GM12878 (cell line): ENCODE measurements at regions of chr5 and their contacts with region 1.

Region 1: DNA sequence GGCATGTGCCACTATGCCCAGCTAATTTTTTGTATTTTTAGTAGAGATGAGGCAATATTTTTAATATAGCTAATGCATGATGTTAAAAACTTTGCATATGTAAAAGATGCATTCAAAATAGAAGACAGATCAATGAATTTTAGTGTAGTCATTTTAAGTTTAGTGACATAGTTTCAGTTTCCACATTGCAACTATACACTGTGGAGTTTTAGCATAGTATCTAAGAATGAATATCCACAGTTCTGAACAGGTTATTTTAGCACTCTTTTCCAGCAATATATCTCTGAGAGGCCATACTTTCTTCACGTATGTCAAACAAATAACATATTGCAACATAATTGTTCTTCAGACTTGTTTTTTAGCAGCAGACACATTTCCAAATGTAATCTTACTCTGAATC is 39.3 kb downstream of the RAB24 start:
- DNase-seq: no peak
- ATAC-seq: no peak
- H3K4me3 ChIP-seq: no peak overlapping the region
- H3K27ac ChIP-seq: no peak overlapping the region
- H3K4me1 ChIP-seq: no peaks in the 10 kb centered on the region
- H3K27me3 ChIP-seq: no peaks in the 10 kb centered on the region
- CTCF ChIP-seq: no peak
- EP300 ChIP-seq: no peak
- POLR2A ChIP-seq: no peak
- RAD21 ChIP-seq: no peak

Region 2: DNA sequence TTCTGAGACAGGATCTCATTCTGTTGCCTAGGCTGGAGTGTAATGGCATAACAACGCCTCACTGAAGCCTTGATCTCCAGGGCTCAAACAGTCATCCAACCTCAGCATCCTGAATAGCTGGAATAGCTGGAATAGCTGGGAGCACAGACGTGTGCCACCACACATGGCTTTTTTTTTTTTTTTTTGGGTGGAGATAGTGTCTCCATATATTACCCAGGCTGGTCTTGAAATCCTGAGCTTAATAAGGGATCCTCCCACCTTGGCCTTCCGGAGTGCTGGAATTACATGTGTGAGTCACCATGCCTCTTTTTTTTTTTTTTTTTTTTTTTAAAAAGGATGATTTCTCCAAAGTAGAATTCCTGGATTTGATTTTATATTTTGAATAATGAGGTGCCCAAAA is 69.9 kb before region 1 on chr5:
- CTCF ChIA-PET with region 1: no interaction called
- POLR2A ChIA-PET with region 1: no interaction called
- RAD21 ChIA-PET with region 1: no interaction called
- SMC1A ChIA-PET with region 1: no interaction called
- in situ Hi-C with region 1: no loop called
- intact Hi-C with region 1: no loop called
- DNase-seq: no peak
- ATAC-seq: no peak
- H3K4me3 ChIP-seq: no peak overlapping the region
- H3K27ac ChIP-seq: no peak overlapping the region
- H3K4me1 ChIP-seq: peaks cover 8% of the 10 kb centered on the region; the same call in 1 of the 2 replicates
- H3K27me3 ChIP-seq: no peaks in the 10 kb centered on the region
- CTCF ChIP-seq: no peak
- EP300 ChIP-seq: no peak
- POLR2A ChIP-seq: no peak
- RAD21 ChIP-seq: no peak

Region 3: DNA sequence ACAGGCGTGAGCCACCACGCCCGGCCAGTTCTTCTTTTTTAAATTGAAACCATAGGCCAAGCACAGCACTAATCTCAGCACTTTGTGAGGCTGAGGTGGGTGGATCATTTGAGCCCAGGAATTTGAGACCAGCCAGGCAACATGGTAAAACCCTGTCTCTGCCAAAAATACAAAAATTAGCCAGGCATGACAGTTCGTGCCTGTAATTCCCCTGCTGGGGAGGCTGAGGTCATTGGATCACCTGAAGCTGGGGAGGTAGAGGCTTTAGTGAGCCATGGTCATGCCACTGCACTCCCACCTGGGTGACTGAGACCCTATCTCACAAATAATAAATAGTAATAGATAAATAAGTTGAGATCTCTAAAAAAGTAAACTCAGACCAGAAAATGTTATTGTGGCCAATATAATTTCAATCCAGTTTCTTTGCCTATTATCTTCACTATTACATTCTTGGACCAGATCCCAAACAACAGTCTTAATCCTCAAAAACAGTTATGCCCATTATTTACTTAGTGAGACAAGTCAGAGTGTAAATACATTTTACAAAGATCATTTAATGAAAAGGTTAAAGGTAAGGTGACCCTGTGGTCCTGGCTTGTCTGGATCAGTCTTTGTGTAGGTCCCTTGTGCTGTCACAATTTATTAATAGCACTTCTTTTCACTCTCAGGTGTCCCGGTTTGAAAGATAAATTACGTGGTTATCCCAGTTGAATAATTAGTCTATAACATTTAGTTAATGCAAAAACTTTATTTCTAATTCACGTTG is 14.2 kb before region 1 on chr5:
- CTCF ChIA-PET with region 1: interaction called, 13 read pairs
- POLR2A ChIA-PET with region 1: interaction called, 7 read pairs
- RAD21 ChIA-PET with region 1: no interaction called
- SMC1A ChIA-PET with region 1: interaction called, 11 read pairs
- in situ Hi-C with region 1: no loop called
- intact Hi-C with region 1: no loop called
- DNase-seq: no peak
- ATAC-seq: no peak
- H3K4me3 ChIP-seq: no peak overlapping the region
- H3K27ac ChIP-seq: no peak overlapping the region
- H3K4me1 ChIP-seq: no peaks in the 10 kb centered on the region
- H3K27me3 ChIP-seq: no peaks in the 10 kb centered on the region
- CTCF ChIP-seq: no peak
- EP300 ChIP-seq: no peak
- POLR2A ChIP-seq: no peak
- RAD21 ChIP-seq: no peak